Naive thymus-derived CD4-positive, alpha-beta T cell (primary cell): ENCODE measurements at regions of chr1 and their contacts with region 1.

Region 1: GRCh38 chr1:220891224-220892085 is 12.2 kb downstream of the HLX start:
- DNase-seq: no peak
- ATAC-seq: peak; percentile 22
- H3K4me3 ChIP-seq: no peak overlapping the region
- H3K4me3 Mint-ChIP-seq: no peak overlapping the region
- H3K27ac ChIP-seq: no peak overlapping the region
- H3K27ac Mint-ChIP-seq: no peak overlapping the region
- H3K4me1 ChIP-seq: no peaks in the 10 kb centered on the region
- H3K4me1 Mint-ChIP-seq: peaks cover 0 to 11% (median 5%) of the 10 kb centered on the region in 7 donors
- H3K27me3 ChIP-seq: no peaks in the 10 kb centered on the region
- H3K27me3 Mint-ChIP-seq: peaks cover 81 to 96% (median 88%) of the 10 kb centered on the region in 5 donors

Region 2: GRCh38 chr1:220879076-220879508 is 12.4 kb before region 1 on chr1 and contains the start of gene HLX:
- CTCF ChIA-PET with region 1: no interaction called
- POLR2A ChIA-PET with region 1: no interaction called
- intact Hi-C with region 1: loop called in 1 of 2 experiments (anchors 2 kb)
- DNase-seq: peak in 1 of 9 donors; percentile 56
- ATAC-seq: peak; percentile 85
- H3K4me3 ChIP-seq: peak within 1 kb of the TSS; percentile 34
- H3K4me3 Mint-ChIP-seq: peak within 1 kb of the TSS; percentile 62 to 87 (median 81)
- H3K27ac ChIP-seq: no peak within 1 kb of the TSS
- H3K27ac Mint-ChIP-seq: peak within 1 kb of the TSS in 1 of 9 donors; percentile 76
- H3K4me1 ChIP-seq: peaks cover 0 to 9% of the 10 kb centered on the region in 2 donors
- H3K4me1 Mint-ChIP-seq: peaks cover 20 to 38% (median 35%) of the 10 kb centered on the region in 7 donors
- H3K27me3 ChIP-seq: peaks cover 0 to 16% of the 10 kb centered on the region in 2 donors
- H3K27me3 Mint-ChIP-seq: peaks cover 72 to 84% (median 73%) of the 10 kb centered on the region in 5 donors
- total RNA-seq, gene HLX: 0.27 to 11.0 (median 2.1) TPM in 4 of 5 experiments, not detected in the other